ENCODE measurements at regions of chr15 and their contacts with region 1.

Region 1: GRCh38 chr15:80769829-80770705 is 9.1 kb upstream of the CEMIP start:
- DNase-seq: no peak
- H3K4me3 ChIP-seq: no peak overlapping the region
- H3K27ac ChIP-seq: no peak overlapping the region
- H3K4me1 ChIP-seq: peaks cover 0 to 12% (median 4%) of the 10 kb centered on the region in 3 donors
- H3K27me3 ChIP-seq: no peaks in the 10 kb centered on the region
- CTCF ChIP-seq: no peak
- POLR2A ChIP-seq: no peak

Region 2: GRCh38 chr15:80619680-80620079 is 150.4 kb before region 1 on chr15:
- intact Hi-C with region 1: no loop called
- DNase-seq: no peak
- H3K4me3 ChIP-seq: no peak overlapping the region
- H3K27ac ChIP-seq: peak overlapping the region in 2 of 4 donors; percentile 36 to 64
- H3K4me1 ChIP-seq: peaks cover 12 to 48% (median 14%) of the 10 kb centered on the region in 3 donors
- H3K27me3 ChIP-seq: no peaks in the 10 kb centered on the region
- CTCF ChIP-seq: peak in 4 of 6 experiments; percentile 17 to 40 (median 26)
- POLR2A ChIP-seq: no peak

Region 3: GRCh38 chr15:80695104-80695910 is 74.8 kb before region 1 on chr15 and contains the start of gene ABHD17C:
- intact Hi-C with region 1: loop called (anchors 10 kb)
- DNase-seq: no peak
- H3K4me3 ChIP-seq: peak within 1 kb of the TSS; percentile 71 to 94 (median 77)
- H3K27ac ChIP-seq: peak within 1 kb of the TSS; percentile 90 to 95 (median 92)
- H3K4me1 ChIP-seq: peaks cover 12 to 68% (median 19%) of the 10 kb centered on the region in 3 donors
- H3K27me3 ChIP-seq: no peaks in the 10 kb centered on the region
- CTCF ChIP-seq: no peak
- POLR2A ChIP-seq: peak in 1 of 4 donors; percentile 68
- total RNA-seq, gene ABHD17C: 18.7 to 37.1 (median 27.1) TPM

Region 4: DNA sequence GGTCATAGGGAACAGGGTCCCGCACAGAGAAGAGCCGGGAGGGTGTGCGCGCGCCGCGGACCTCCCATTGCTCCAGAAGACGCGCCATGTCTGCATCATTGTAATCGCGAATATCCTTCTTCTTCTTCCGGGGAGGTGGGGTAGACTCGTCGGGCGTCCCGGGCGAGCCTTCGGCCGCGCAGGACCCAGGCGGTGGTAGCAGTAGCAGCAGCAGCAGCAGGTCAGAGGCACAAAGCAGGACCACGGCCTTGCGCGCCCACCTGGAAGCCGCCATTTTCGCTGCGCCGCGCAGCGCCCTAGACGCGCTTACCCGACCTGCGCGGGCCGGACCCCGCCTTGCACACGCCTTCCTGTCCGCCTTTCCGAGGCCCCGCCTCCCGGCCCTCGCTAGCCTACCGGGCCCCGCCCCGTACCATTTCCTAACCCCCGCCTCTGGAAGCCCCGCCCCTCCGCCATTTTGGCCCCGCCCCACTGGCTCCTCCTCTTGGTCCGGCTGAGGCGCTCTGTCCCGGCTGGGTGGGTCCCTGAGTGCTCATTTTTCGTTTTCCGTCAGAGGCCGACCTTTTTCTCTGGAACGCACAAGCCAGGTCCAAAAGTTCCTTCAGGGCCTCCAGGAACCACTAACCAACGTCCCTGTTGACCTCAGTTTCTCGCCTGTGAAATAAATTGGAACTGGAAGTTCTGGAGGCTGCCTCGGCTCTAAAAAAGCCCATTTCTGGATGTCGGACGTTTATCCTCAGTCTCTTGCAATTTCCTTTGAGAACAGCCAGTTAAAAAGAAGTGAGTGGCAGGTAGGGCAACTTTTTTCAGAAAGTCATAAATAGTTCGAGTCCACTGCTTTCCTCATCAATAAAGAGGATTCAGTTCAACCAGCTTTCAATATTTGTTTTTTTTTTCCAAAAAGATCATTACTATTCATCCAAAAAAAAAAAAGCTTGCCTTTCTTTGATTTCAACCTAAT is 219.7 kb after region 1 on chr15 and contains the start of gene MESD:
- intact Hi-C with region 1: no loop called
- DNase-seq: peak; percentile 90
- H3K4me3 ChIP-seq: peak within 1 kb of the TSS; percentile 62 to 91 (median 76)
- H3K27ac ChIP-seq: peak within 1 kb of the TSS; percentile 91 to 95 (median 92)
- H3K4me1 ChIP-seq: peaks cover 24 to 71% (median 41%) of the 10 kb centered on the region in 3 donors
- H3K27me3 ChIP-seq: no peaks in the 10 kb centered on the region
- CTCF ChIP-seq: no peak
- POLR2A ChIP-seq: peak in 3 of 4 donors; percentile 81 to 94 (median 86)
- total RNA-seq, gene MESD: 13.8 to 25.4 (median 19.1) TPM